ENCODE measurements at regions of chrX and their contacts with region 1.

Region 1: GRCh38 chrX:45322382-45322781 is 121.7 kb upstream of the DIPK2B start:
- DNase-seq: peak; percentile 83
- ATAC-seq: peak; percentile 87
- H3K4me3 ChIP-seq: no peak overlapping the region
- H3K27ac ChIP-seq: peak overlapping the region; percentile 66
- H3K4me1 ChIP-seq: no peaks in the 10 kb centered on the region
- H3K27me3 ChIP-seq: peaks cover 4% of the 10 kb centered on the region
- CTCF ChIP-seq: peak; percentile 69
- POLR2A ChIP-seq: no peak
- RAD21 ChIP-seq: peak; percentile 81

Region 2: DNA sequence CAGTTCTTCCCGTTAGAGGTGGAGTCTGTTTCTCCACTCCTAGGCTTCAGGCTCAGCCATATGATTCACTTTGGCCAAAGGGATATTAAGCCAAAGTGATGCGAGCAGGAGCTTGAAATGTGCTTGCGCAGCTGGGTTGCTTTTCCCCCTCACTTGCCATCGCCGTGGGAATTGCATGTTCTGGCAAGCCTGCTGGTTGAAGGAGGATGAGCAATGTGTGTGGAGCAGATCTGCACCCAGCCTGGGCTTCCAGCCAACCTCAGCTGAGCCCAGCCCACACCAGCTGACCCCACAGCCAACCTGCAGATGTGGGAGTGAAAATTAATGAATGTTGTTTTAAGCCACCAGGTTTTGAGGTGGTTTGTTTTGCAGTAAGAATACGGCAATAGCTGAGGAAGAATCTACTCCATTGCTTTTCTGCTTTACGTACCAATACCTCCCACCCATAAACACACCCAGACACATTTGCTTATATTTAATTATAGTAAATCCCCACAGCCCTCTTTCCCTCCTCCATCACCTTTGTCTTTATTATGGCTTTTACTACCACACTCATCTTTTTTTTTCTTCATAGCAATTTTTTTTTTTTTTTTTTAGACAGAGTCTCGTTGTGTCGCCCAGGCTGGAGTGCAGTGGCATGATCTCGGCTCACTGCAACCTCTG is 646.9 kb before region 1 on chrX:
- CTCF ChIA-PET with region 1: no interaction called
- POLR2A ChIA-PET with region 1: no interaction called
- dilution Hi-C with region 1: no loop called
- in situ Hi-C with region 1: no loop called
- intact Hi-C with region 1: no loop called
- DNase-seq: peak; percentile 91
- ATAC-seq: peak; percentile 91
- H3K4me3 ChIP-seq: no peak overlapping the region
- H3K27ac ChIP-seq: no peak overlapping the region
- H3K4me1 ChIP-seq: no peaks in the 10 kb centered on the region
- H3K27me3 ChIP-seq: no peaks in the 10 kb centered on the region; the same call in none of the 2 replicates
- CTCF ChIP-seq: no peak
- POLR2A ChIP-seq: no peak
- RAD21 ChIP-seq: no peak

Region 3: GRCh38 chrX:45240301-45240700 is 82.1 kb before region 1 on chrX:
- CTCF ChIA-PET with region 1: no interaction called
- POLR2A ChIA-PET with region 1: no interaction called
- dilution Hi-C with region 1: no loop called
- in situ Hi-C with region 1: no loop called
- intact Hi-C with region 1: no loop called
- DNase-seq: no peak
- ATAC-seq: no peak
- H3K4me3 ChIP-seq: no peak overlapping the region
- H3K27ac ChIP-seq: no peak overlapping the region
- H3K4me1 ChIP-seq: no peaks in the 10 kb centered on the region
- H3K27me3 ChIP-seq: peaks cover 19% of the 10 kb centered on the region
- CTCF ChIP-seq: no peak
- POLR2A ChIP-seq: no peak
- RAD21 ChIP-seq: no peak

Region 4: DNA sequence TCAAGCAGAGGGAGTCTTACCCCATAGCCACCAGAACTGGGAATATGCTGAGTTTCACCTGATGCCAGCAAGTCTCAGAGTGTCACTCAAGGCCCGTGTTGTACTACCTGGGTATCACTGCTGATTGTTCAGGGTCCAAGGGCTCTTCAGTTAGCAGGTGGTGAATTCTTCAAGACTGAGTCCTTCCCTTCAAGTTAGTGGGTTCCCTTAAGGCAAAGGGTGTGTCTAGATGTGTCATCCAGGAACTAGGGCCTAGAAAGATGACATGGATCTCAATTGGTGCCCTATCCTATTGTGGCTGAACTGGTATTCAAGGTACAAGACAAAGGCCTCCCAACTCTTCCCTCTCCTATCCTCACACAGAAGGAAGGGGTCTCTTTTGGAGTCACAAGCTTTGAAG is 38.2 kb after region 1 on chrX:
- CTCF ChIA-PET with region 1: no interaction called
- POLR2A ChIA-PET with region 1: no interaction called
- dilution Hi-C with region 1: no loop called
- in situ Hi-C with region 1: no loop called
- intact Hi-C with region 1: no loop called
- DNase-seq: no peak
- ATAC-seq: no peak
- H3K4me3 ChIP-seq: no peak overlapping the region
- H3K27ac ChIP-seq: no peak overlapping the region
- H3K4me1 ChIP-seq: no peaks in the 10 kb centered on the region
- H3K27me3 ChIP-seq: no peaks in the 10 kb centered on the region; the same call in 1 of the 2 replicates
- CTCF ChIP-seq: no peak
- POLR2A ChIP-seq: no peak
- RAD21 ChIP-seq: no peak

Region 5: GRCh38 chrX:45508454-45508853 is 186.1 kb after region 1 on chrX:
- CTCF ChIA-PET with region 1: interaction called, 11 read pairs
- POLR2A ChIA-PET with region 1: interaction called, 3 read pairs
- dilution Hi-C with region 1: no loop called
- in situ Hi-C with region 1: loop called (anchors 10 kb)
- intact Hi-C with region 1: no loop called
- DNase-seq: peak; percentile 23
- ATAC-seq: no peak
- H3K4me3 ChIP-seq: no peak overlapping the region
- H3K27ac ChIP-seq: no peak overlapping the region; the same call in 1 of the 2 replicates
- H3K4me1 ChIP-seq: peaks cover 14% of the 10 kb centered on the region
- H3K27me3 ChIP-seq: peaks cover 4% of the 10 kb centered on the region
- CTCF ChIP-seq: no peak
- POLR2A ChIP-seq: no peak
- RAD21 ChIP-seq: no peak

Region 6: DNA sequence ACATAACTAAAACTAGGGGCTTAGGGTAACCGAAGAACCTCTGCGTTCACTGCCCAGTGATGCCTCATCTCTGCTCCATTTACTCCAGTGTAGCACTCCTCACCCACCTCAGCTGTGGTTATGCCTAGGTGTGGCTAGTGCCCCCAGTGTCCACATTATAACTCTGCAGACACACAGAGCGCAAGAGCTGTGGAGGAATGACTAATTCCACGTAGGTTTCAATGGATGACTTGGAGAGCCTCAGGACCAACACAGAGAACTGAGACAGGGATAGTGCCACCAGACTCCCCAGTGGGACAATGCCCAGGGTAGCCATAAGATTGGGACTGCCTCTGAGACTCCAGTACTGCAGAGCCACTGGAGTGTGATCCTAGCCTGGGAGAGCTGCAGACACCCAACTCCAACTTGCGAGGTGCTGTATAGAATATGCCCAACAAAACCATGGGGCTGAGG is 420.7 kb after region 1 on chrX:
- CTCF ChIA-PET with region 1: no interaction called
- POLR2A ChIA-PET with region 1: interaction called, 3 read pairs
- dilution Hi-C with region 1: no loop called
- in situ Hi-C with region 1: no loop called
- intact Hi-C with region 1: loop called (anchors 1 kb)
- DNase-seq: peak; percentile 75
- ATAC-seq: peak; percentile 62
- H3K4me3 ChIP-seq: no peak overlapping the region
- H3K27ac ChIP-seq: no peak overlapping the region
- H3K4me1 ChIP-seq: no peaks in the 10 kb centered on the region
- H3K27me3 ChIP-seq: no peaks in the 10 kb centered on the region
- CTCF ChIP-seq: peak; percentile 40
- POLR2A ChIP-seq: no peak; the same call in 1 of the 2 replicates
- RAD21 ChIP-seq: peak; percentile 48

Region 7: DNA sequence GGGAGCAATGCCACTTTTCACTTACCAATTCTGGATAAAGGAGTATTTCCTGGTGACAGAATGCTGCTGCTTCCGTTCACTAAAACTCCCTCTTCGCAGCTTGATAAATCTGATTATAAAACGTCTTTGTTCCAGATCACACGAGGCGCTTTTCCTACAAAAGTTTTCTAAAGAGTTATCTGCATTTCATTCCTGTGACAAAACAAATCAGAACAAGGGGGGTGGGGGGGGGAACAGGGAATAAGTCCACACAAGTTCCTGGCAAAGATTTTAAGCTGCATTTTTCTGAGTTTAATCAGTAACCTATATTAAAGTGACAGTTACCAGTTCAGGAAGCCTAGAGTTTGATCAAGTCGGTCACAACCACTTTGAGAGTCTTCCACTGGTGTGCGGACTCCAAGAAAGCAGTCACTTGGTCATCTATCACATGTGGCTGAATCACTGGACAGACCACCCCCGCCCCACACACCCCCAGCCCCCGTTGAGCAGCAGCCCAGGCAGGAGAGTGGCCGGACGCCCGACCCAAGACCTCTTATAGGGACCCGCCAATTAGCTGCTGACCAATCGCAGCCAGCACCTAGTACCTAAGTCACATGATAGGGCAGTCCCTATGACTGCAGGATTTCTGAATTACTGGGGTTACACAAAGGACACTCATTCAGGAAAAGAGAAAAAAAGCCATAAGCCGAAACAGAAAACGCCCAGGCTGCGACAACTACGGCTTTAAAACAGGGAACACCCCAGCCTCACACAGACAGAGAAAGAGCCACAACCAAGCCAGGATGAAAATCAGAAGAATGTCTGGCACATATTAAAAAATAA is 447.6 kb after region 1 on chrX:
- CTCF ChIA-PET with region 1: interaction called, 3 read pairs
- POLR2A ChIA-PET with region 1: no interaction called
- dilution Hi-C with region 1: no loop called
- in situ Hi-C with region 1: no loop called
- intact Hi-C with region 1: loop called (anchors 5 kb)
- DNase-seq: peak; percentile 91
- ATAC-seq: peak; percentile 57
- H3K4me3 ChIP-seq: peak overlapping the region; percentile 68
- H3K27ac ChIP-seq: peak overlapping the region; percentile 81
- H3K4me1 ChIP-seq: peaks cover 5% of the 10 kb centered on the region; the same call in 1 of the 2 replicates
- H3K27me3 ChIP-seq: no peaks in the 10 kb centered on the region
- CTCF ChIP-seq: no peak
- POLR2A ChIP-seq: peak; percentile 83
- RAD21 ChIP-seq: no peak

Region 8: GRCh38 chrX:46376246-46376885 is 1054.0 kb after region 1 on chrX:
- CTCF ChIA-PET with region 1: interaction called, 5 read pairs
- POLR2A ChIA-PET with region 1: no interaction called
- dilution Hi-C with region 1: no loop called
- in situ Hi-C with region 1: no loop called
- intact Hi-C with region 1: loop called (anchors 1 kb)
- DNase-seq: peak; percentile 48
- ATAC-seq: peak; percentile 83
- H3K4me3 ChIP-seq: no peak overlapping the region
- H3K27ac ChIP-seq: no peak overlapping the region
- H3K4me1 ChIP-seq: 0 out of 2 replicates have a peak, but pooled peaks cover 2% of the 10 kb centered on the region
- H3K27me3 ChIP-seq: no peaks in the 10 kb centered on the region
- CTCF ChIP-seq: peak; percentile 45
- POLR2A ChIP-seq: no peak
- RAD21 ChIP-seq: peak; percentile 55